CD8-positive, alpha-beta T cell (primary cell): ENCODE measurements at regions of chr4 and their contacts with region 1.

Region 1: GRCh38 chr4:48388525-48389154 is 47.3 kb downstream of the SLAIN2 start:
- DNase-seq: no peak
- ATAC-seq: no peak
- H3K4me3 ChIP-seq: no peak overlapping the region
- H3K4me3 Mint-ChIP-seq: no peak overlapping the region
- H3K27ac ChIP-seq: no peak overlapping the region
- H3K27ac Mint-ChIP-seq: no peak overlapping the region
- H3K4me1 ChIP-seq: no peaks in the 10 kb centered on the region
- H3K4me1 Mint-ChIP-seq: no peaks in the 10 kb centered on the region
- H3K27me3 ChIP-seq: no peaks in the 10 kb centered on the region
- H3K27me3 Mint-ChIP-seq: no peaks in the 10 kb centered on the region
- CTCF ChIP-seq: no peak

Region 2: GRCh38 chr4:48369248-48369647 is 19.4 kb before region 1 on chr4:
- CTCF ChIA-PET with region 1: no interaction called
- POLR2A ChIA-PET with region 1: interaction called, 4 read pairs
- intact Hi-C with region 1: loop called in 1 of 2 experiments (anchors 2 kb)
- DNase-seq: no peak
- ATAC-seq: no peak
- H3K4me3 ChIP-seq: no peak overlapping the region
- H3K4me3 Mint-ChIP-seq: no peak overlapping the region
- H3K27ac ChIP-seq: no peak overlapping the region
- H3K27ac Mint-ChIP-seq: peak overlapping the region; percentile 25
- H3K4me1 ChIP-seq: peaks cover 10% of the 10 kb centered on the region
- H3K4me1 Mint-ChIP-seq: peaks cover 58% of the 10 kb centered on the region
- H3K27me3 ChIP-seq: no peaks in the 10 kb centered on the region
- H3K27me3 Mint-ChIP-seq: no peaks in the 10 kb centered on the region
- CTCF ChIP-seq: no peak